Upper lobe of right lung (tissue), 1 donor: ENCODE measurements at regions of chr3 and their contacts with region 1.

Region 1: GRCh38 chr3:45656575-45657363 is 32.4 kb upstream of the SACM1L start:
- DNase-seq: peak; percentile 92
- ATAC-seq: peak; percentile 96
- H3K4me3 ChIP-seq: no peak overlapping the region
- H3K27ac ChIP-seq: peak overlapping the region; percentile 40
- H3K4me1 ChIP-seq: peaks cover 39% of the 10 kb centered on the region
- H3K27me3 ChIP-seq: no peaks in the 10 kb centered on the region
- CTCF ChIP-seq: peak; percentile 92

Region 2: GRCh38 chr3:45593708-45594609 is 62.8 kb before region 1 on chr3:
- intact Hi-C with region 1: loop called (anchors 10 kb)
- DNase-seq: peak; percentile 90
- ATAC-seq: peak; percentile 89
- H3K4me3 ChIP-seq: peak overlapping the region; percentile 91
- H3K27ac ChIP-seq: peak overlapping the region; percentile 94
- H3K4me1 ChIP-seq: peaks cover 47% of the 10 kb centered on the region
- H3K27me3 ChIP-seq: no peaks in the 10 kb centered on the region
- CTCF ChIP-seq: no peak